Activated naive CD4-positive, alpha-beta T cell treated with anti-CD3 and anti-CD28 coated beads for 36 hours (primary cell): ENCODE measurements at regions of chr1 and their contacts with region 1.

Region 1: GRCh38 chr1:39653546-39654031 is 14.1 kb upstream of the HEYL start:
- DNase-seq: peak; percentile 90
- H3K4me3 Mint-ChIP-seq: no peak overlapping the region
- H3K27ac Mint-ChIP-seq: no peak overlapping the region
- H3K4me1 Mint-ChIP-seq: peaks cover 8% of the 10 kb centered on the region
- H3K27me3 Mint-ChIP-seq: peaks cover 8% of the 10 kb centered on the region

Region 2: GRCh38 chr1:39268112-39268581 is 385.4 kb before region 1 on chr1:
- CTCF ChIA-PET with region 1: no interaction called
- intact Hi-C with region 1: loop called (anchors 10 kb)
- DNase-seq: peak; percentile 30
- H3K4me3 Mint-ChIP-seq: peak overlapping the region; percentile 69
- H3K27ac Mint-ChIP-seq: peak overlapping the region; percentile 54
- H3K4me1 Mint-ChIP-seq: peaks cover 75% of the 10 kb centered on the region
- H3K27me3 Mint-ChIP-seq: no peaks in the 10 kb centered on the region

Region 3: GRCh38 chr1:39639305-39640130 is 14.1 kb before region 1 on chr1 and contains the start of gene HEYL:
- CTCF ChIA-PET with region 1: interaction called, 10 read pairs
- intact Hi-C with region 1: no loop called
- DNase-seq: peak; percentile 76
- H3K4me3 Mint-ChIP-seq: peak within 1 kb of the TSS; percentile 52
- H3K27ac Mint-ChIP-seq: no peak within 1 kb of the TSS
- H3K4me1 Mint-ChIP-seq: no peaks in the 10 kb centered on the region
- H3K27me3 Mint-ChIP-seq: peaks cover 14% of the 10 kb centered on the region
- total RNA-seq, gene HEYL: 0.15 to 0.17 TPM

Region 4: GRCh38 chr1:39680751-39681150 is 27.2 kb after region 1 on chr1:
- CTCF ChIA-PET with region 1: interaction called, 160 read pairs
- intact Hi-C with region 1: no loop called
- DNase-seq: no peak
- H3K4me3 Mint-ChIP-seq: no peak overlapping the region
- H3K27ac Mint-ChIP-seq: no peak overlapping the region
- H3K4me1 Mint-ChIP-seq: peaks cover 29% of the 10 kb centered on the region
- H3K27me3 Mint-ChIP-seq: peaks cover 5% of the 10 kb centered on the region

Region 5: GRCh38 chr1:39720094-39720999 is 66.8 kb after region 1 on chr1:
- CTCF ChIA-PET with region 1: interaction called, 11 read pairs
- intact Hi-C with region 1: loop called (anchors 1 kb)
- DNase-seq: no peak
- H3K4me3 Mint-ChIP-seq: no peak overlapping the region
- H3K27ac Mint-ChIP-seq: no peak overlapping the region
- H3K4me1 Mint-ChIP-seq: no peaks in the 10 kb centered on the region
- H3K27me3 Mint-ChIP-seq: peaks cover 36% of the 10 kb centered on the region

Region 6: DNA sequence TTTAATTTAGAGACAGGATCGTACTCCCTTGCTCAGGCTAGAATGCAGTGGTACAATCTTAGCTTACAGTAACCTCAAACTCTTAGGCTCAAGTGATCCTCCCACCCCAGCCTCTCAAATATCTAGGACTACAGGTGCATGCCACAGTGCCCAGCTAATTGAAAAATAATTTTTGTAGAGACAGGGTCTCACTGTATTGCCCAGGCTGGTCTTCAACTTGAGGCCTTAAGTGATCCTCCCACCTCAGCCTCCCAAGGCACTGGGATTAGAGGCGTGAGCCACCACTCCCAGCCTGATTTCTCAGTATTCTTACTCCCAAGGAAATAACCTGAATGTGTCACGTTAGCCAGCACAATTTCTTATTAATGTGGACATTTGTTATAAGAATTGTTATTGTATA is 517.4 kb after region 1 on chr1:
- CTCF ChIA-PET with region 1: no interaction called
- intact Hi-C with region 1: no loop called
- DNase-seq: no peak
- H3K4me3 Mint-ChIP-seq: no peak overlapping the region
- H3K27ac Mint-ChIP-seq: no peak overlapping the region
- H3K4me1 Mint-ChIP-seq: peaks cover 42% of the 10 kb centered on the region
- H3K27me3 Mint-ChIP-seq: no peaks in the 10 kb centered on the region